Activated CD4-positive, alpha-beta memory T cell treated with anti-CD3 and anti-CD28 coated beads for 36 hours (primary cell): ENCODE measurements at regions of chr5 and their contacts with region 1.

Region 1: GRCh38 chr5:112921833-112922817 is at the start of gene REEP5:
- DNase-seq: peak; percentile 89
- H3K4me3 Mint-ChIP-seq: peak within 1 kb of the TSS; percentile 95
- H3K27ac Mint-ChIP-seq: peak within 1 kb of the TSS; percentile 94
- H3K4me1 Mint-ChIP-seq: peaks cover 60% of the 10 kb centered on the region
- H3K27me3 Mint-ChIP-seq: no peaks in the 10 kb centered on the region
- total RNA-seq, gene REEP5: 64.6 to 67.4 TPM

Region 2: GRCh38 chr5:112160652-112161391 is 761.3 kb before region 1 on chr5:
- CTCF ChIA-PET with region 1: no interaction called
- POLR2A ChIA-PET with region 1: no interaction called
- intact Hi-C with region 1: loop called (anchors 5 kb)
- DNase-seq: peak; percentile 94
- H3K4me3 Mint-ChIP-seq: peak overlapping the region; percentile 91
- H3K27ac Mint-ChIP-seq: peak overlapping the region; percentile 50
- H3K4me1 Mint-ChIP-seq: peaks cover 33% of the 10 kb centered on the region
- H3K27me3 Mint-ChIP-seq: no peaks in the 10 kb centered on the region

Region 3: GRCh38 chr5:112707187-112708102 is 214.7 kb before region 1 on chr5:
- CTCF ChIA-PET with region 1: interaction called, 3 read pairs
- POLR2A ChIA-PET with region 1: no interaction called
- intact Hi-C with region 1: loop called (anchors 2 kb)
- DNase-seq: peak; percentile 98
- H3K4me3 Mint-ChIP-seq: peak overlapping the region; percentile 87
- H3K27ac Mint-ChIP-seq: peak overlapping the region; percentile 87
- H3K4me1 Mint-ChIP-seq: peaks cover 49% of the 10 kb centered on the region
- H3K27me3 Mint-ChIP-seq: no peaks in the 10 kb centered on the region

Region 4: GRCh38 chr5:112878760-112879159 is 43.4 kb before region 1 on chr5:
- CTCF ChIA-PET with region 1: interaction called, 4 read pairs
- POLR2A ChIA-PET with region 1: interaction called, 6 read pairs
- intact Hi-C with region 1: loop called (anchors 1 kb)
- DNase-seq: peak; percentile 79
- H3K4me3 Mint-ChIP-seq: peak overlapping the region; percentile 5
- H3K27ac Mint-ChIP-seq: peak overlapping the region; percentile 84
- H3K4me1 Mint-ChIP-seq: peaks cover 35% of the 10 kb centered on the region
- H3K27me3 Mint-ChIP-seq: no peaks in the 10 kb centered on the region

Region 5: DNA sequence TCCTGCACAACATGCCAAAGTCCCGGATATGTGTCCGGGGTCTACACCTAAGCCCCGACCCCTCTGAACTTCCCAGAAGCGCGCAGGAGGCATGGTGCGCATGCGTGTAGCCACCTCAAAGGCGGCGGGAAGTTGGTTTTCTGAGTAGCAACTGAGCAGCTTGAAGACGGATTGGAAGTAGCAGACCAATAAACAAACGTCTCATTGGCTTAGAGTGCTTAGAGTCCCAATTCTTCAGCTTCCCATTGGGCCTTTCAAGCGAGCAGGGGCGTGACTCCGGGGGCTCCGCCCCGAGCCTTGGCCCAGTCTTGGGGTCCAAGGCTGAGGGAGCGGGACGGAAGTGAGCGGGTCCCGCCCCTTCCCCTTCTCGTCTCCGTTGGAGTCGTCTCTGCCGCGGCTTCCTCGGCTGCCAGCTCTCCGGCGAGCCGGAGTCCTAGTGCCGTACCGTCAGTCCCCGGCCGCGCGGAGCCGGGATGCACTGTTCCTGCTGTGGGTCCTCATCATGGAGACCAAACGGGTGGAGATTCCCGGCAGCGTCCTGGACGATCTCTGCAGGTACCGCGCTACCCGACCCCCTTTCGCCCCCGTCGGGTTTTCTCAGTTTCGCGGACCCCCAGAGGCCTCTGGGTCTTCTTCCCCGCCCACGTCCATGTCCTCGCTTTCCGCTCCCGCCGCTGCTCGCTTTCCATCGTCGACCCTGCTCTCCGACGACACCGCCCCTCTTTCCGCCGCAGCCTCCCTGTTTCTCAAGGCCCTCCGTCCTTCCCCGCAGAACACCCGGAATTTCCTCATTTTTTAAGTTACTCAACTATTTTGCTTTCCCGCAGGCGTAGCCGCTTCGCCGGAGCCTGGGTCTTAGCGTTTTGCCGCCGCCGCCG is 54.5 kb after region 1 on chr5 and contains the start of gene DCP2:
- CTCF ChIA-PET with region 1: interaction called, 5 read pairs
- POLR2A ChIA-PET with region 1: interaction called, 18 read pairs
- intact Hi-C with region 1: loop called (anchors 1 kb)
- DNase-seq: peak; percentile 97
- H3K4me3 Mint-ChIP-seq: peak within 1 kb of the TSS; percentile 85
- H3K27ac Mint-ChIP-seq: peak within 1 kb of the TSS; percentile 98
- H3K4me1 Mint-ChIP-seq: peaks cover 39% of the 10 kb centered on the region
- H3K27me3 Mint-ChIP-seq: no peaks in the 10 kb centered on the region
- total RNA-seq, gene DCP2: 102 TPM